Activated T-helper 1 cell treated with anti-CD3 and anti-CD28 coated beads, Interleukin-12 subunit alpha, Interleukin-12 subunit beta, Interleukin-2, Interleukin-4 antibody, amounts not matched to agents 30 ng/mL and 10 ng/mL and 1 ng/mL, durations not matched to agents 14 hours and 24 hours and 36 hours (primary cell): ENCODE measurements at regions of chr9 and their contacts with region 1.

Region 1: GRCh38 chr9:132575005-132575609 is 7.3 kb upstream of the BARHL1 start:
- DNase-seq: peak; percentile 25
- H3K4me3 Mint-ChIP-seq: no peak overlapping the region
- H3K27ac Mint-ChIP-seq: no peak overlapping the region
- H3K4me1 Mint-ChIP-seq: no peaks in the 10 kb centered on the region
- H3K27me3 Mint-ChIP-seq: peaks cover 51% of the 10 kb centered on the region

Region 2: DNA sequence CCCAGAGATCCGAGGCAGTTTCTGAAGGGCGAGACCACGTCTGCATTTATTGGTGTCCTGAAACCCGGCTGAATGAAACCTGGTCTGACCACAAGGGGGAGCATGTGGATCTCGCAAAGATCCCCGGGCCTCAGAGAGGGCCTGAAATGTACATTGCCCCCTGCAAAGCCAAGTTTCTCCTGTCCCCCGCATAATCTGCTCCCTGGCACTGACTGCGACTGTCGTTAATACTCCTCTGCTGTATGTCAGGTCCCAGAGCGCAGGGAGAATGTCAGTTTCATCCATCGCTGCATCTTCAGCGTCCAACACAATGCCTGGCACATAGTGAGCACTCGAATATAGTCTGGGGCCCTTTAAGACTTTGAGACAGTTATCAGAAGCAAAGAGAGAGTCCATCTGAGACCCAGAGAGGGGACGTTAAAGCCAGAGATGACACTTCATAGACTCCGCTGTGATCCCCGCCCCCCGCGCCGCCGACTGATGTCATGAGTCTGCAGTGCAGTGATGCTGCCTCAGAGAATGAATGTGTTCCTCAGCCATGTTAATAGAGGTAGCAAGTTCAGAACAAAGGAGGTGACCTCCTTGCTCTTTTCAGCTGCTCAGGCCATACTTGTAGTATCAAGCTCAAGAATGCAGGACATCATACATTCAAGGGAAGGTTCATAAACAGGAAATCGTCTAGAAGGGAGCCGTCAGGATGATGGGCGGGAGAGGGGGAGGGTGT is 67.2 kb before region 1 on chr9:
- intact Hi-C with region 1: loop called (anchors 1 kb)
- DNase-seq: peak; percentile 47
- H3K4me3 Mint-ChIP-seq: no peak overlapping the region
- H3K27ac Mint-ChIP-seq: no peak overlapping the region
- H3K4me1 Mint-ChIP-seq: peaks cover 14% of the 10 kb centered on the region
- H3K27me3 Mint-ChIP-seq: peaks cover 6% of the 10 kb centered on the region